B cell (primary cell): ENCODE measurements at regions of chr4 and their contacts with region 1.

Region 1: GRCh38 chr4:90127223-90127705 is at the start of gene CCSER1:
- DNase-seq: peak; percentile 94
- ATAC-seq: peak; percentile 86
- H3K4me3 ChIP-seq: peak within 1 kb of the TSS; percentile 27 to 98 (median 79)
- H3K4me3 Mint-ChIP-seq: peak within 1 kb of the TSS; percentile 96
- H3K27ac ChIP-seq: peak within 1 kb of the TSS; percentile 89 to 90
- H3K27ac Mint-ChIP-seq: peak within 1 kb of the TSS; percentile 95
- H3K4me1 ChIP-seq: peaks cover 6 to 7% of the 10 kb centered on the region in 2 donors
- H3K4me1 Mint-ChIP-seq: peaks cover 21% of the 10 kb centered on the region
- H3K27me3 ChIP-seq: no peaks in the 10 kb centered on the region
- H3K27me3 Mint-ChIP-seq: no peaks in the 10 kb centered on the region
- CTCF ChIP-seq: no peak
- total RNA-seq, gene CCSER1: 39.5 and 42.9 TPM in 2 replicates

Region 2: GRCh38 chr4:88456757-88457306 is 1670.4 kb before region 1 on chr4 and contains the start of gene HERC5:
- CTCF ChIA-PET with region 1: no interaction called
- POLR2A ChIA-PET with region 1: no interaction called
- intact Hi-C with region 1: loop called (anchors 2 kb)
- DNase-seq: peak; percentile 96
- ATAC-seq: peak; percentile 94
- H3K4me3 ChIP-seq: peak within 1 kb of the TSS; percentile 69 to 93 (median 85)
- H3K4me3 Mint-ChIP-seq: peak within 1 kb of the TSS; percentile 100
- H3K27ac ChIP-seq: peak within 1 kb of the TSS; percentile 52 to 70
- H3K27ac Mint-ChIP-seq: peak within 1 kb of the TSS; percentile 99
- H3K4me1 ChIP-seq: peaks cover 11 to 16% of the 10 kb centered on the region in 2 donors
- H3K4me1 Mint-ChIP-seq: peaks cover 19% of the 10 kb centered on the region
- H3K27me3 ChIP-seq: no peaks in the 10 kb centered on the region
- H3K27me3 Mint-ChIP-seq: no peaks in the 10 kb centered on the region
- CTCF ChIP-seq: no peak
- total RNA-seq, gene HERC5: 10.6 and 12.0 TPM in 2 replicates

Region 3: GRCh38 chr4:89294573-89295269 is 832.5 kb before region 1 on chr4:
- CTCF ChIA-PET with region 1: no interaction called
- POLR2A ChIA-PET with region 1: no interaction called
- intact Hi-C with region 1: loop called (anchors 10 kb)
- DNase-seq: peak; percentile 53
- ATAC-seq: peak; percentile 46
- H3K4me3 ChIP-seq: no peak overlapping the region
- H3K4me3 Mint-ChIP-seq: peak overlapping the region; percentile 48
- H3K27ac ChIP-seq: no peak overlapping the region
- H3K27ac Mint-ChIP-seq: no peak overlapping the region
- H3K4me1 ChIP-seq: peaks cover 54 to 59% of the 10 kb centered on the region in 2 donors
- H3K4me1 Mint-ChIP-seq: peaks cover 63% of the 10 kb centered on the region
- H3K27me3 ChIP-seq: peaks cover 0 to 9% (median 2%) of the 10 kb centered on the region in 4 experiments
- H3K27me3 Mint-ChIP-seq: peaks cover 25% of the 10 kb centered on the region
- CTCF ChIP-seq: no peak

Region 4: DNA sequence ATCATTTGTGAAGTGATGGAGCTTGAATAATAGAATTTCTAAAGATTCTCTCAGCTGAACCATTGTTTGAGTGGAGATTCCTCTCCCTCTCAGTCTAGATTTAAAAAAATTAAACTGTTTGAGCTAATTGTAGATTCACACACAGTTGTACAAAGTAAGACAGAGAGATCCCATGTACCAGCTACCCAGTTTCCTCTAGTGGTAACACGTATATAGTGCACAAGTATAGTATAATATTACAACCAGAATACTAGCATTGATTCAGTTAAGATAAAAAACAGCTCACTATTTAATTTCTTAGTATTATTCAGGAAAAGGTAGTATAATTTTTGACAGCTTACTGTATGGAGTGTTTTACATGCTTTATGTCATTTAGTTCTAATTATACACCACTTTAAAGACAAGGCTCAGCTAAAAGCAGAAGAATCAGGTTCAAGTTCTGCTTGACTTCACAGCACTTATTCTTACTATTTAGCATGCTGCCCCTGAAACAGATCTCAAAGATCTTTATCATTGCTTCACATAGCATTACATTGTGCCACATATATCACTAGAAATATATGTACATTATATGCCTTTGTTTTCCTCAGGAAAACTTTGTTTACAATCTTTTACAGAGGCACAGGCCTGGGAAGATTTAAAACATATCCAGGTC is 426.4 kb before region 1 on chr4:
- CTCF ChIA-PET with region 1: no interaction called
- POLR2A ChIA-PET with region 1: no interaction called
- intact Hi-C with region 1: no loop called
- DNase-seq: no peak
- ATAC-seq: no peak
- H3K4me3 ChIP-seq: no peak overlapping the region
- H3K4me3 Mint-ChIP-seq: no peak overlapping the region
- H3K27ac ChIP-seq: no peak overlapping the region
- H3K27ac Mint-ChIP-seq: no peak overlapping the region
- H3K4me1 ChIP-seq: no peaks in the 10 kb centered on the region
- H3K4me1 Mint-ChIP-seq: no peaks in the 10 kb centered on the region
- H3K27me3 ChIP-seq: no peaks in the 10 kb centered on the region
- H3K27me3 Mint-ChIP-seq: no peaks in the 10 kb centered on the region
- CTCF ChIP-seq: no peak

Region 5: GRCh38 chr4:90071289-90072235 is 55.7 kb before region 1 on chr4:
- CTCF ChIA-PET with region 1: no interaction called
- POLR2A ChIA-PET with region 1: interaction called, 3 read pairs
- intact Hi-C with region 1: loop called (anchors 5 kb)
- DNase-seq: peak; percentile 76
- ATAC-seq: peak; percentile 83
- H3K4me3 ChIP-seq: peak overlapping the region in 4 of 5 experiments; percentile 3 to 29 (median 15)
- H3K4me3 Mint-ChIP-seq: peak overlapping the region; percentile 74
- H3K27ac ChIP-seq: peak overlapping the region; percentile 4 to 27
- H3K27ac Mint-ChIP-seq: peak overlapping the region; percentile 2
- H3K4me1 ChIP-seq: peaks cover 18 to 29% of the 10 kb centered on the region in 2 donors
- H3K4me1 Mint-ChIP-seq: peaks cover 33% of the 10 kb centered on the region
- H3K27me3 ChIP-seq: peaks cover 0 to 4% (median 0%) of the 10 kb centered on the region in 4 experiments
- H3K27me3 Mint-ChIP-seq: peaks cover 15% of the 10 kb centered on the region
- CTCF ChIP-seq: no peak

Region 6: GRCh38 chr4:90281541-90282355 is 154.5 kb after region 1 on chr4:
- CTCF ChIA-PET with region 1: no interaction called
- POLR2A ChIA-PET with region 1: no interaction called
- intact Hi-C with region 1: no loop called
- DNase-seq: no peak
- ATAC-seq: no peak
- H3K4me3 ChIP-seq: no peak overlapping the region
- H3K4me3 Mint-ChIP-seq: no peak overlapping the region
- H3K27ac ChIP-seq: no peak overlapping the region
- H3K27ac Mint-ChIP-seq: no peak overlapping the region
- H3K4me1 ChIP-seq: peaks cover 0 to 4% of the 10 kb centered on the region in 2 donors
- H3K4me1 Mint-ChIP-seq: no peaks in the 10 kb centered on the region
- H3K27me3 ChIP-seq: no peaks in the 10 kb centered on the region
- H3K27me3 Mint-ChIP-seq: no peaks in the 10 kb centered on the region
- CTCF ChIP-seq: no peak

Region 7: GRCh38 chr4:90293320-90293719 is 166.1 kb after region 1 on chr4:
- CTCF ChIA-PET with region 1: no interaction called
- POLR2A ChIA-PET with region 1: no interaction called
- intact Hi-C with region 1: loop called (anchors 2 kb)
- DNase-seq: peak; percentile 13
- ATAC-seq: no peak
- H3K4me3 ChIP-seq: no peak overlapping the region
- H3K4me3 Mint-ChIP-seq: no peak overlapping the region
- H3K27ac ChIP-seq: no peak overlapping the region
- H3K27ac Mint-ChIP-seq: no peak overlapping the region
- H3K4me1 ChIP-seq: no peaks in the 10 kb centered on the region
- H3K4me1 Mint-ChIP-seq: no peaks in the 10 kb centered on the region
- H3K27me3 ChIP-seq: no peaks in the 10 kb centered on the region
- H3K27me3 Mint-ChIP-seq: no peaks in the 10 kb centered on the region
- CTCF ChIP-seq: peak; percentile 88